ENCODE measurements at regions of chr7 and their contacts with region 1.

Region 1: DNA sequence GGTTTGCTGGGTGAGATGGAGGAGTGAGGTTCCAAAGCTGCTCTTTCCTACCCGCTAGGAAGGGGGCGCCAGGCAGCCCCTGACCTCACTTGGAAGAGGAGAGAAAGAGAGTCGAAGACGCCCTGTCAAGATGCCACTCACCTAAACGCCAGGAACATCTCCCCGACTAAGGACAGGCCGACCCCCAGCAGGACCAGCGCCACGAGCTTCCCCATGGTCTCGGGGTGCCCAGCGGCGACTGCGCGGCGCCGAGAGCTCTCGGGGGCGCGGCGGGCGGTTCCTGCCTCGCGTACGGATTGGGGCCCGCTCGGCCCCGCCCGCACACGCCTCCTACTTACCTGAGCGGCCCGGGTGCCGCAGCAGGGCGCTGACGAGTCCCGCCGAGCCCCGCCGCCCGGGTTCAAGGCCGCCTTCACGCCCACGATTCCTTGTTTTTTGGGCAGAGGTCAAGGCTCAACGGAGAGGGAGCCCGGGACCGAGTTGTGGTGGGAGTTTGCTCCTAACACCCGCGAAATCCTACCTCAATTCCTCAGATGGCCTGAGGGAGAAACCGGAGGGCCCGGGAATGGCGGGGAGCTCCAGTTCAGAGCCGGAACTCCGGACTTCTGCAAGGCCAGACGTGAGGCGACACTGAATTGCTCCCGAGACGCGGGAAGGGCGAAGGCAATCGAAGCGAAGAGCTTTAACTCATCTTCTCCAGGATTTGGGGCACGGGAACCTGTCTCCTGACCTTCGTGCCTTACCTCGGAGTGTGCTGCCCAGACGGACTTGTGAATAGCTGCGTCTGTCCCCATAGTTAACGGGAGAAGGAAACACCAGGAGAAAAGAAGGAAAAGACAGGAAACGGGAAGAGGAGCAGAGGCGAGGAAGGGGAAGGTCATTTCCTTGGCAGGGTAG is at the start of gene PON3:
- DNase-seq: peak; percentile 17
- H3K4me3 Mint-ChIP-seq: peak within 1 kb of the TSS; percentile 61
- H3K27ac Mint-ChIP-seq: no peak within 1 kb of the TSS
- H3K4me1 Mint-ChIP-seq: peaks cover 6% of the 10 kb centered on the region
- H3K27me3 Mint-ChIP-seq: peaks cover 39% of the 10 kb centered on the region
- total RNA-seq, gene PON3: 0.14 and 0.30 TPM in 2 replicates

Region 2: GRCh38 chr7:95434557-95435421 is 38.4 kb after region 1 on chr7 and contains the start of gene PON2:
- intact Hi-C with region 1: loop called (anchors 5 kb)
- DNase-seq: peak; percentile 35
- H3K4me3 Mint-ChIP-seq: peak within 1 kb of the TSS; percentile 82
- H3K27ac Mint-ChIP-seq: peak within 1 kb of the TSS; percentile 77
- H3K4me1 Mint-ChIP-seq: peaks cover 15% of the 10 kb centered on the region
- H3K27me3 Mint-ChIP-seq: peaks cover 6% of the 10 kb centered on the region
- total RNA-seq, gene PON2: 16.5 and 17.5 TPM in 2 replicates

Region 3: DNA sequence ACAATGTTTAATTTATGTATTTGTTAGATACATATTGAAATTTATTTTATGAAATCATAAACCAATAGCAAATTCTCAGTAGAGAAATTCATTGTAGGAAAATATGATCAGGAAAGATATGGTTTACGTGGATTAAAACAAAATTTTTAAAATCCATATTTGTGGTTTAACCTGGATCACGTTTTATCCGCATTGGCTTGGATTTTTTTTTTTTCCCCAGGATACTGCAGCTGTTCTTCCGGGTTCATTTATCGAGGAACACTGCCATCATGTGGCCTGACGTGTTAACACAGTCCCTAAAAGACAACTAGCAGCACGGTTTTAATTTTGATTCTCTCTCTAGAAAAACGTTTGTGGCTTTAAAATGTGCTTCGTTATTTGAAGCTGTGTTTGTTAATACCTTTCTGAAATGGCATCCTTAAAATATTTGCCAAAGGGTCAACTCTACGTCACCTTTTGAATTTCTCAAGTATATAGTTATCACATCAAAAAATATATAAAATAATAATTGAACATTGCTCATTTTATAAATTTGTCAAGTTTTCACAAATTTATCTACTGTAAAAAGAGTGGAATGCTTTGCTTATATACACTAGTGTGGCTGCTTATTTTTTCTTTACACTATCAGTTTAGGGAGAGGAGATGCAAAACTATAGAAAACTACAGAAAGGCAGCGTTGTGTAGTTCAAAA is 80.7 kb after region 1 on chr7:
- intact Hi-C with region 1: loop called (anchors 2 kb)
- DNase-seq: peak; percentile 34
- H3K4me3 Mint-ChIP-seq: no peak overlapping the region
- H3K27ac Mint-ChIP-seq: no peak overlapping the region
- H3K4me1 Mint-ChIP-seq: no peaks in the 10 kb centered on the region
- H3K27me3 Mint-ChIP-seq: peaks cover 10% of the 10 kb centered on the region